SK-N-SH (cell line): ENCODE measurements at regions of chr11 and their contacts with region 1.

Region 1: DNA sequence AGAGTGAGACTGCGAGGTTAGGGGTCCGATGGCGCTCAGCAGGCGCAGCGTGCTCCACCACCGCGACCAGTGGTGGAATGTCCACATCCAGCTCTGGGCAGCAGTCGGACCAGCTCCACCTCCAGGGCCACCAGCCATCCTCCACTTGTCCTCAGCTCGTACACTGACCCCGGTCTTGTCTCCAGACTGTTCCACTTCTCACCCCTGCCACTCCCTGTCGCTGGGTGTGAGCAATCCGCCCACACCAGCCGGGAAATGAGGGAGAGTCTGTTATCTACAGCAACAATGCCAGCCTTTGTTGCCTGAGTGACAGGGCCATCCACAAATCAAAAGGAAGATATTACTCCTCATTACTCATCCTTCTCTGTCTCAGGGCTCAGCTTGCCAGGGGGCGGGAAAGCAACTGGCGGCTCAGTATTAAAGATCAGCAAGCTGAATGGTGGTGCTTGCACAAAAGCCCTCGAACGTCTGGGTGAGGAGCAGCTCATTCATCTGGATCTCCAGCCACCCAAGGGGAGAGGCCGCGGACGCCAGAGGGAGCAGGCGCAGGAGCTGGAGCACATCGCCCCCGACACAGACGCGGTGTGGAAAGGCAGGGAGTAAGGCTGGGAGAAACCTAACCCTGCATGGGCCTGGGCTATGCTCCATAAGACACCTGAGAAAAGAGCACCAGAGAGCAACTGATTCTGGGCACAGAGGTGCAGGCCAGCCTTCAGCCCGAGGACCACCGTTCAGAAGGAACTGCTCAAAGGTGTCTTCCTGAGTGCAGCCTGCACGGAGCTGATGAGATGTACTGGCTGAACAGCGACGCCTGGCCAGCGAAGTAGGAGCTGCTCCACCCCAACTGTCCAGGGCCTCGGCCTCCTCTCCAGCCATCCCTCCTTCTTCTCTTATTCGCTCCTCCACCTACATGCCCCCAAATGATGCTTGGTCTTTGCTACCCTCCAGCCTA is 21.9 kb downstream of the IGSF9B start:
- DNase-seq: peak; percentile 87
- H3K4me3 ChIP-seq: no peak overlapping the region
- H3K27ac ChIP-seq: peak overlapping the region in 1 of 2 experiments; percentile 100; a peak in 2 of 4 replicates
- H3K4me1 ChIP-seq: peaks cover 0 to 66% of the 10 kb centered on the region in 2 experiments; a peak in 1 of 4 replicates
- H3K27me3 ChIP-seq: no peaks in the 10 kb centered on the region
- CTCF ChIP-seq: no peak
- EP300 ChIP-seq: 0 out of 4 replicates have a peak, but pooled peaks of 1 of the 2 experiments have one; percentile 12
- RAD21 ChIP-seq: no peak

Region 2: GRCh38 chr11:133947321-133947756 is 12.5 kb after region 1 on chr11:
- CTCF ChIA-PET with region 1: interaction called, 37 read pairs
- POLR2A ChIA-PET with region 1: interaction called, 102 read pairs
- DNase-seq: peak; percentile 77
- H3K4me3 ChIP-seq: peak overlapping the region in 1 of 2 experiments; percentile 15; a peak in 1 of 4 replicates
- H3K27ac ChIP-seq: peak overlapping the region in 1 of 2 experiments; percentile 89; a peak in 2 of 4 replicates
- H3K4me1 ChIP-seq: peaks cover 0 to 100% of the 10 kb centered on the region in 2 experiments; a peak in 1 of 4 replicates
- H3K27me3 ChIP-seq: no peaks in the 10 kb centered on the region; the same call in 1 of the 2 replicates
- CTCF ChIP-seq: peak; percentile 53
- EP300 ChIP-seq: no peak
- RAD21 ChIP-seq: peak; percentile 61

Region 3: GRCh38 chr11:133956650-133957633 is 22.1 kb after region 1 on chr11 and contains the start of gene IGSF9B:
- CTCF ChIA-PET with region 1: interaction called, 11 read pairs
- POLR2A ChIA-PET with region 1: interaction called, 9 read pairs
- DNase-seq: peak; percentile 98
- H3K4me3 ChIP-seq: peak within 1 kb of the TSS; percentile 63 to 64
- H3K27ac ChIP-seq: peak within 1 kb of the TSS in 1 of 2 experiments; percentile 91; a peak in 2 of 4 replicates
- H3K4me1 ChIP-seq: peaks cover 0 to 41% of the 10 kb centered on the region in 2 experiments; a peak in 2 of 4 replicates
- H3K27me3 ChIP-seq: peaks cover 17% of the 10 kb centered on the region
- CTCF ChIP-seq: no peak
- EP300 ChIP-seq: no peak
- RAD21 ChIP-seq: no peak
- polyA plus RNA-seq, gene IGSF9B: 0.41 and 0.96 TPM in 2 replicates